Right ventricle myocardium inferior (tissue), 1 donor: ENCODE measurements at regions of chr4 and their contacts with region 1.

Region 1: DNA sequence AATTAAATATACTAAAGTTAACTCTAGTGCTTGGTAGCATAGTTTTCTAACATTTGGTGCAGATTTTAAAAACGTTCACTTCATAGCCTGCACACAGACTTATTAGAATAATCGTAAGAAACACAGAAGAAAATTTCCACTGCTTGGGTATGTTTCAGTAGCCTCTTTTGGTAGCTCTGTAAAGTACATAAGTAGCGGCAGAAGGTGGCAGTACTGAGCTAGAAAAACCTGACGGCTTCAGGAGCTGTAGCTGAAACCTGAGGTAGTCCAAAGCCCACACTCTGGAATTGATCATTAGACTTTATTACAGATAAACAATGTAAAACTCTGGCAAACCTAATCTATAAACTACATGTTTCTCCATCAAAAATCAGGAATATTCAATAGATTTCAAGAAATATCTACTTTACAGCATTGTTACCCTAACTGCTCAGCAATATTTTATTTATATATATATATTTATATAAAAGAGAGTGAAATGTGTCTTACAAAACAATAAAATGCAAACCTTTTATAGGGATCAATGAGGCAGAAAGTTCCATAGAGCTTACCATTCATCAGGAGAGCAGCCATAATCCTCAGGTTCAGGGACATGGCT is 88.2 kb downstream of the ATP8A1 start:
- DNase-seq: no peak
- ATAC-seq: peak; percentile 72

Region 2: DNA sequence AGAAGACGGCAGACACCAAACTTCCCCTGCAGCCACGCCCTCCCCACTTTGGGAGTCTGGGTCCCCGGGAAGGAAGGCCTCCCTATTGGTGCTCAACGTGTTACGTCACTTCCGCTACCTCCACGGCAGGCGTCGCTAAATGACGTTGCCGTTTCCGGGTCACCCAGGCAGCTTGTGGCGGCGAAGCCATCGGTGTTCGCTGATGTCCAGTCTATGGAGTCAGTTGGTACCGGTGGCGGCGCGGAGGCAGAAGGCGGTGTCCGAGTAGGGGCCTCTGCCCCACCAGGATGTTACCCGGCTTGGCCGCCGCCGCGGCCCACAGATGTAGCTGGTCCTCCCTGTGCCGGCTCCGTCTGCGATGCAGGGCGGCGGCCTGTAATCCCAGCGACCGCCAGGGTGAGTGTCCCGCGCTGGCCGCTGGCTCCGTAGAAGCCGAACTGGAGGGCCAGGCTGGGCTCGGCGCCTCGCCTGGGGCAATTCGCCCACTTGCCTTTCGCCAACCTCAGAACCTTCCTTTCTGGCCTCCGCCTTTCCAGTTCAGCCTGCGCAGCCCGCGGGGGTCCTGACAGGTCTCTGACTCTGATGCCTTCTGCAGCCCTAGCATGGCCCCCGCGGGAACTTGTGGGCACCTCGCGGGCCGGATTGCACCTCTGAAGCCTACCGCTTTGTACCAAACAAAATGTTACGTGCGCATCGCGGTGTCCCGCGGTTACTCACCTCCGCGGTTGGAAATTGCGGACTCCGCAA is 578.2 kb before region 1 on chr4 and contains the start of gene SLC30A9:
- intact Hi-C with region 1: no loop called
- DNase-seq: peak; percentile 97
- ATAC-seq: peak; percentile 99
- total RNA-seq, gene SLC30A9: 74.8 TPM

Region 3: DNA sequence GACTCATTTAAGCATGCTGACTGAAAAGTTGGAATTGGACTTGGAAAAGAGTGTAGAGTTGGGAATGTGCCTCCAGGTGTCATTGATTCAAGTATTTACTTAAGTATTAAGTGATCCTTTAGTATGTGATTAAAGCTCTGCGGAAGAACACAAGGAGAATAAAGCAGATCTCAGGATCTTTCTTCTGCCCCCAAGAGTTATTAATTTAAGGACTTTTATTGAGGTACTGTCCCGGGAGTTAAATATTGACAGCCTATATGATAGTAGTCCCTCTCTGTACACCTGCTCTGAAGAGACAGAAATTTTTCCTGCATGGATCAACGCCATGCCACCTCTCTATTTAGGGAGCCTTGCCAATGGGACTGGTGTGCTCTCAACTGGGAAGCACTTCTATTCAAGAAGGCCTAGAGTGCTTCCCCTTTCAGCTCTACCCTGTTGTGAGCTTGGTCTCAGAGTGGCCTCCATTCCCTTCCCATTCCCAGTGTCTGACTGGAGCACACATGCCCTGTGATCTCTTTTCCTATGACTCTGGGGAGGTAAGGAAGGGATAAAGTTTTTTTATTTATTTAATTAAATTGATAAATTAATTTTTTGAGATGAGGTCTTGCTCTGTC is 95.5 kb before region 1 on chr4:
- intact Hi-C with region 1: no loop called
- DNase-seq: no peak
- ATAC-seq: no peak

Region 4: DNA sequence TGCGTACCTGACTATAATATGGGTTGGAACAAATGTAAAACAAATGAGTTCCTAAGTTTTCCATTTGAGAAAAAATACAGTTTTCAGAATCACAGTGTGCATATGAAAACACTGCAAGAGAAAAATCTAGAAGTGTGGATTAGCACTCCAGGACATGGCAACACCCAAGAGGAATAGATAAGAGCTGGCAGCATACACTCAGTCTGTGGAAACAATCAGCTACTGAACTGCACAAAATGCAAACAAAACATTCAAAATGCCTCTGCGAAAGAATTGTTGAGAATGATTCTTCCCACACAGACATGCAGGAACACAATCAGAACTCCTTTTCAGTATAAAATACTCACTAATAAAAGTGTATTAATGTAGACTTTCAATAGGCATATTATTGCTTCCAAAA is 48.3 kb after region 1 on chr4:
- intact Hi-C with region 1: loop called (anchors 5 kb)
- DNase-seq: no peak
- ATAC-seq: peak; percentile 48

Region 5: DNA sequence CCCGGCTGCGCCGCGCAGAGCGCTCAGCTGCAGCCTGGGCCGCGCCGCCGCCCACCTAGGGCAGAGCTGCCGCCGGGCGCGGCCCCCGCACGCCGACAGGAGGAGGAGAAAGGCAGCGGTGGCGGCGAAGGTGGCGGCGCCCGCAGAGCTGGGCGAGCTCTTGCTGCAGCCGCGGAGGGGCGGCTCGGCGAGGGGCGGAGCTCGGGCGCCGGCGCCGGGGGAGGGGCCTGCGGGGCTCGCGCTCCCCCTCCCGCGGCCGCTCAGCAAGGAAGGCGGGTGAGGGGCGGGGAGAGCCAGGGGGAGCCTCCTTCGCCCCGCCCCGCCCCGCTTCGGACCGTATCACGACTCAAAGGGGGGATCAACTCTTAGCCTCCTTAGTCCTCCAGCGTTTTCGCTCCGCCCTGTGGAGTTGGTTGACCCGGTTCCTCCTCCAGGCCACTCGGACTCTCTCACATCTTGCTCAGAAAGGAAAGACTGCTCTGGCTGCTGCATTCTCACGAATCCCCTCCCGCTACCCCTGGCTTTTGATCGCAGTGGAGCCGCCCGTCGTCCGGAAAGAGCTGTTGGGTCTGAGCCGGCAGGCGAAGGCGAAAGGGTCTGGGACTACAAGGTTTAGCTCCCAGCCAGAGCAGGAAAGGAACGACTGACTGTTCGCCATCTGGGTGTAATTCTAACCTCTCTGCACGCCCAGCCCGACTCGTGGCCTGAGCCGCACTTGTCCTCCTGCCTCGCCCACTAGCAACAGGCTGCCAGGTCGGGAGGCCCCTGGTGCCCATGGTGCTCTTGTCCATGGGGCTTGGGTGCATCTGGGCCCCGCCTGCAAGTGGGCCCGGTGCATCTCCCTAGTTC is 88.5 kb after region 1 on chr4 and contains the start of gene ATP8A1:
- intact Hi-C with region 1: loop called (anchors 2 kb)
- DNase-seq: peak; percentile 97
- ATAC-seq: peak; percentile 98
- total RNA-seq, gene ATP8A1: 14.6 TPM

Region 6: GRCh38 chr4:42673082-42673425 is 104.3 kb after region 1 on chr4:
- intact Hi-C with region 1: loop called (anchors 5 kb)
- DNase-seq: peak; percentile 64
- ATAC-seq: peak; percentile 94

Region 7: GRCh38 chr4:42750091-42750490 is 181.4 kb after region 1 on chr4:
- intact Hi-C with region 1: loop called (anchors 1 kb)
- DNase-seq: no peak
- ATAC-seq: peak; percentile 82

Region 8: DNA sequence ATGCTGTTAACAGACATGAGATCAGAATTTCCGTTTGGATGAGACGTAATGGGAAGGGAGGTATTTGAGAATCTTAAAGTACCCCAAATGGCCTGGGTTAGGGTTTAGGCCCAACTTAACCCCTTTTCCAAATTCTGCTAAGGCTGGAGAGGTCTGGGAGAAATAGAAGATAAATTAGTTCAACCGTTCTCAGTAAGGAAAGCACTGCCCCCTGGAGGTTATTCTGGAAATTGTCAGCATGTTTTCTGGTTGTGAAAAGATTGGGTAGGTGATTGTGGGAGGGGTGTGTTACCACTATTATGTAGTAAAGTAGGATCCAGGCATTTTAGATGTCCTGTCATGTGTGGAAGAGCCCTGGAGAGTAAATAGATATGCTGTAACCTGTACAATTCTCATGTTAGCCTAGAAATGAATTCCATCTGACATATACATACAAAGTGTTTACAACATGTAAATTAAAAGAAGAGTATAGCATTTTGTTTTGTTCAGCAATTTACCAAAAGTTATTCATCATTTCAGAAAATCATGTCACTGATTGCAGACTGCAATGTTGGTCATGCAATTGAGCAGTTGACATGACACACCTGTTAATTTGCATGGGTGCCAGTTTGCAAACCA is 297.0 kb after region 1 on chr4:
- intact Hi-C with region 1: loop called (anchors 1 kb)
- DNase-seq: no peak
- ATAC-seq: no peak